Heart right ventricle (tissue), 16 donors: ENCODE measurements at regions of chr18 and their contacts with region 1.

Region 1: GRCh38 chr18:9136315-9137155 is at the start of gene ANKRD12:
- DNase-seq: peak; percentile 97 to 99
- ATAC-seq: peak; percentile 96 to 99 (median 97)
- H3K4me3 ChIP-seq: peak within 1 kb of the TSS; percentile 61 to 94 (median 80)
- H3K27ac ChIP-seq: peak within 1 kb of the TSS; percentile 92 to 99 (median 98)
- H3K4me1 ChIP-seq: peaks cover 0 to 65% (median 47%) of the 10 kb centered on the region in 9 donors
- H3K27me3 ChIP-seq: no peaks in the 10 kb centered on the region
- CTCF ChIP-seq: no peak
- total RNA-seq, gene ANKRD12: 34.5 to 70.2 (median 55.5) TPM

Region 2: GRCh38 chr18:9109523-9109922 is 27.0 kb before region 1 on chr18:
- intact Hi-C with region 1: loop called in 4 of 10 experiments (anchors 5 kb)
- DNase-seq: no peak
- ATAC-seq: no peak
- H3K4me3 ChIP-seq: no peak overlapping the region
- H3K27ac ChIP-seq: peak overlapping the region in 3 of 10 donors; percentile 6 to 63 (median 53)
- H3K4me1 ChIP-seq: peaks cover 12 to 99% (median 90%) of the 10 kb centered on the region in 9 donors
- H3K27me3 ChIP-seq: no peaks in the 10 kb centered on the region
- CTCF ChIP-seq: no peak

Region 3: DNA sequence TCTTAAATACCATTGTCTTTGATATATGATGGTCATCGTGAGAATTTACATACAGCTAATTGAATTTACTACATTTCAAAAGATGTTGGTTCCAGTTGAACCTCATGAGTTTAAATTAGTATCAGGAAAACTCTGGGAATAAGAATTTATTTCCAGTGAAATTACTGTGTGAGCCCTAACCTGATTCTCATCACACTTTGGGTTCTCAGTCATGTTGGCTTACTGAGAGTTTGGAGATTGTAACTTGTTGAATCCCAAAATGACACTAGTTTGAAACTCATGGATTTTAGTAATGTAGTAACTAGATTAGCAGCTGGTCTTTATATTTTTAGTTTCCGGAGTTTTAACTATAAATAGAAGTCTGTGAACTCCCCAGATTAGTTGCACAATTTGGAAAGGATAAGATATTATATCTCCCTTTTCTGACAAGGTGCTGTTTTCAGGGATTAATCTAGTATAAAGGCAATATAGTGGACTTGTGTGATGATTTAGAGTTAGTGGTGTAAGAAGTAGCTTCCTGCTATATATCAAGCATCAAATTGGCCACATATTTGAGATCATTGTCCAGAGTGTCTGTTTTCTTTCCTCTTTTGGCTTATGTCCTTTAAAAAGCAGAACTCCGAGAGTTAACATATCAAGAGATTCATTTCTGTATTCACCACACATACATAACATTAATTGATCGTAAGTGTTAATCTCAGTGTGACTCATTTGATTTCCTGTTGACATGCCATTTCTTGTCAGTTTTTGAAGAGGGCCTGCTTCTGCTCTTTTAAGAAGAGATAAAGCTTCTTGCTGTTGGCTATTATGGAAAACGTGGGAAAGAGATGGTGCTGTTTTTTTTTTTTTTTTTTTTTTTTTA is 18.3 kb before region 1 on chr18:
- intact Hi-C with region 1: loop called in 2 of 10 experiments (anchors 2 kb)
- DNase-seq: no peak
- ATAC-seq: peak in 6 of 8 donors; percentile 12 to 61 (median 26)
- H3K4me3 ChIP-seq: peak overlapping the region in 3 of 10 donors; percentile 5 to 37 (median 17)
- H3K27ac ChIP-seq: peak overlapping the region in 9 of 10 donors; percentile 8 to 89 (median 64)
- H3K4me1 ChIP-seq: peaks cover 11 to 97% (median 90%) of the 10 kb centered on the region in 9 donors
- H3K27me3 ChIP-seq: no peaks in the 10 kb centered on the region
- CTCF ChIP-seq: no peak